Head of caudate nucleus (tissue), 42 donors: ENCODE measurements at regions of chr1 and their contacts with region 1.

Region 1: GRCh38 chr1:113928941-113929749 is at the start of gene HIPK1:
- DNase-seq: peak; percentile 86 to 98 (median 95)

Region 2: GRCh38 chr1:113904674-113905434 is 24.3 kb before region 1 on chr1 and contains the starts of genes AP4B1 and DCLRE1B:
- intact Hi-C with region 1: loop called (anchors 1 kb)
- DNase-seq: peak; percentile 93 to 99 (median 98)